Natural killer cell (primary cell): ENCODE measurements at regions of chr5 and their contacts with region 1.

Region 1: GRCh38 chr5:115634343-115635132 is 8.7 kb upstream of the TMED7 start:
- DNase-seq: peak; percentile 75 to 89
- ATAC-seq: peak; percentile 95 to 100 (median 98)
- H3K4me3 ChIP-seq: peak overlapping the region; percentile 32
- H3K4me3 Mint-ChIP-seq: peak overlapping the region; percentile 84
- H3K27ac ChIP-seq: peak overlapping the region; percentile 53
- H3K27ac Mint-ChIP-seq: peak overlapping the region; percentile 67 to 81
- H3K4me1 ChIP-seq: no peaks in the 10 kb centered on the region
- H3K4me1 Mint-ChIP-seq: peaks cover 0 to 8% of the 10 kb centered on the region in 2 donors
- H3K27me3 ChIP-seq: no peaks in the 10 kb centered on the region
- H3K27me3 Mint-ChIP-seq: peaks cover 2 to 25% of the 10 kb centered on the region in 2 donors
- CTCF ChIP-seq: peak; percentile 99

Region 2: GRCh38 chr5:115857636-115858309 is 223.2 kb after region 1 on chr5:
- intact Hi-C with region 1: no loop called
- DNase-seq: no peak
- ATAC-seq: no peak
- H3K4me3 ChIP-seq: no peak overlapping the region
- H3K4me3 Mint-ChIP-seq: no peak overlapping the region
- H3K27ac ChIP-seq: no peak overlapping the region
- H3K27ac Mint-ChIP-seq: peak overlapping the region; percentile 37 to 80
- H3K4me1 ChIP-seq: no peaks in the 10 kb centered on the region
- H3K4me1 Mint-ChIP-seq: peaks cover 27 to 35% of the 10 kb centered on the region in 2 donors
- H3K27me3 ChIP-seq: no peaks in the 10 kb centered on the region
- H3K27me3 Mint-ChIP-seq: no peaks in the 10 kb centered on the region
- CTCF ChIP-seq: no peak

Region 3: DNA sequence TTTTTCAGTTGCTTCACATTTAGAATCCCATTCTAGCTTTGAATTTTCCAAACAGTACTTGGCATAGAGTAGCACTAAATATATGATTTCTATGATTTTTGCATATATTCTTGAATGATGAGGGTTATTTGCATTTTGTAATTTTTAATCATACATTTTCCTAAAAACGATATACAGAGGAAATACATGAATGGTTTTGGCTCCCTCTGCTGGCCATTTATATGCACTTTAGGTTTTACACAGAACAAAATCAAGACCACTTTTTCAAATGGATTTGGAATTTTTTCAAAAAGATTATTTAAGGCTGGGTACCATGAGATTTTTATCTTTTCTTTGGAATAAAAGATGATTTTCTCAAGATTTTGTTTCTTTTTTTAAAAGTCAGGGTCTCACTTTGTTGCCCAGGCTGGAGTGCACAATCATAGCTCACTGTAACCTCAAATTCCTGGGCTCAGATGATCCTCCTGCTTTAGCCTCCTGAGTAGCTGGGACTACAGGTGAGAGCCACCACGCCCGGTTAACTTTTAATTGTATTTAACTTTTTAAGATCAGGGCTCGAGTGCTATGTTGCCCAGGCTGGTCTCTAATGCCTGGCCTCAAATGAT is 433.6 kb after region 1 on chr5:
- intact Hi-C with region 1: loop called (anchors 1 kb)
- DNase-seq: peak in 1 of 2 donors; percentile 82
- ATAC-seq: peak in 2 of 3 donors; percentile 68 to 70
- H3K4me3 ChIP-seq: no peak overlapping the region
- H3K4me3 Mint-ChIP-seq: no peak overlapping the region
- H3K27ac ChIP-seq: no peak overlapping the region
- H3K27ac Mint-ChIP-seq: no peak overlapping the region
- H3K4me1 ChIP-seq: no peaks in the 10 kb centered on the region
- H3K4me1 Mint-ChIP-seq: no peaks in the 10 kb centered on the region
- H3K27me3 ChIP-seq: no peaks in the 10 kb centered on the region
- H3K27me3 Mint-ChIP-seq: peaks cover 13 to 27% of the 10 kb centered on the region in 2 donors
- CTCF ChIP-seq: peak; percentile 84